ENCODE measurements at regions of chr18 and their contacts with region 1.

Region 1: GRCh38 chr18:44673256-44673880 is 7.3 kb upstream of the SETBP1 start:
- DNase-seq: no peak
- ATAC-seq: no peak
- H3K4me3 ChIP-seq: no peak overlapping the region
- H3K4me3 Mint-ChIP-seq: no peak overlapping the region
- H3K27ac ChIP-seq: no peak overlapping the region
- H3K27ac Mint-ChIP-seq: no peak overlapping the region
- H3K4me1 ChIP-seq: no peaks in the 10 kb centered on the region
- H3K4me1 Mint-ChIP-seq: peaks cover 3% of the 10 kb centered on the region
- H3K27me3 ChIP-seq: no peaks in the 10 kb centered on the region
- H3K27me3 Mint-ChIP-seq: peaks cover 16% of the 10 kb centered on the region
- CTCF ChIP-seq: no peak

Region 2: GRCh38 chr18:44627280-44627679 is 46.1 kb before region 1 on chr18:
- CTCF ChIA-PET with region 1: no interaction called
- POLR2A ChIA-PET with region 1: no interaction called
- intact Hi-C with region 1: loop called in 1 of 2 experiments (anchors 1 kb)
- DNase-seq: no peak
- ATAC-seq: no peak
- H3K4me3 ChIP-seq: no peak overlapping the region
- H3K4me3 Mint-ChIP-seq: no peak overlapping the region
- H3K27ac ChIP-seq: no peak overlapping the region
- H3K27ac Mint-ChIP-seq: no peak overlapping the region
- H3K4me1 ChIP-seq: no peaks in the 10 kb centered on the region
- H3K4me1 Mint-ChIP-seq: no peaks in the 10 kb centered on the region
- H3K27me3 ChIP-seq: no peaks in the 10 kb centered on the region
- H3K27me3 Mint-ChIP-seq: no peaks in the 10 kb centered on the region
- CTCF ChIP-seq: no peak

Region 3: DNA sequence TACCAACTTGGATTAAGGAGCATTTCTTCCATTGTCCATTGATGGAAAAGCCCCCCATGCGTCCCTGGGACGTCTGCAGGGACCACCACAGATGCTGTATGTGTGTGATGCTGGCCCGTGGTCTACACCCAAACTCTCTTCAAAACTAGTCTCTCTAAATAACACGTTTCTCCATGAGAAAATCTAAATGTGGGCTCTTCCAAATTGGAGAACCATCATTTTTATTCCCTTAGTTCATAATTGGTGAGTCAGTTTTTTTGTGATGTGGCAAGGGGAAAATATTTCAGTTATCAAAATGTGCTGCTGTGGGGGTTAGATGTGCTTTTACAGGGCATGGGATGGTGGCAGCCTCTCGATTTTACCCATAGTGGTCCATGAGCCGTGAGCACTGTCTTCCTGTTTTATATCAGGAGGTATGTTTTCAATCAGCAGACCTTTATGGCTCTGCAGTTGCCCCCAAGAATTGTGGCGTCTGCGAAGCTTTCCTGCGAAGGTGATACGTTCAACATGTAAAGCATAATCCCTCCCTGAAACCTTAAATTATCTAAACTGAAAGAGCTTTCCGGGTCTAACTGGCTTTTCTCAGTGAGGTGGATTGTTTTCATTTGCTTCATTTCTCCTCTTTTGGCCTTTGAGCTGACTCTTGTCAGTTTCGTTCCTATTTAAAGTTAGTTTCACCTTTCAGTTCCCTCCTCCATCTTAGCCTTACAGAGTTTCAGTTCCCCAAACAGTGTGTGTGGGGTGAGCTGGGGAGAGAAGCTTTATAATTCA is 85.7 kb after region 1 on chr18:
- CTCF ChIA-PET with region 1: no interaction called
- POLR2A ChIA-PET with region 1: no interaction called
- intact Hi-C with region 1: no loop called
- DNase-seq: peak in 2 of 9 experiments; percentile 23 to 54
- ATAC-seq: peak; percentile 46
- H3K4me3 ChIP-seq: peak overlapping the region in 1 of 2 experiments; percentile 18
- H3K4me3 Mint-ChIP-seq: peak overlapping the region; percentile 37
- H3K27ac ChIP-seq: peak overlapping the region; percentile 6 to 63
- H3K27ac Mint-ChIP-seq: peak overlapping the region; percentile 85
- H3K4me1 ChIP-seq: peaks cover 12% of the 10 kb centered on the region
- H3K4me1 Mint-ChIP-seq: peaks cover 18% of the 10 kb centered on the region
- H3K27me3 ChIP-seq: no peaks in the 10 kb centered on the region
- H3K27me3 Mint-ChIP-seq: no peaks in the 10 kb centered on the region
- CTCF ChIP-seq: no peak

Region 4: GRCh38 chr18:46035696-46036680 is 1362.6 kb after region 1 on chr18:
- CTCF ChIA-PET with region 1: no interaction called
- POLR2A ChIA-PET with region 1: no interaction called
- intact Hi-C with region 1: no loop called
- DNase-seq: no peak
- ATAC-seq: no peak
- H3K4me3 ChIP-seq: no peak overlapping the region
- H3K4me3 Mint-ChIP-seq: no peak overlapping the region
- H3K27ac ChIP-seq: no peak overlapping the region
- H3K27ac Mint-ChIP-seq: no peak overlapping the region
- H3K4me1 ChIP-seq: peaks cover 11% of the 10 kb centered on the region
- H3K4me1 Mint-ChIP-seq: peaks cover 18% of the 10 kb centered on the region
- H3K27me3 ChIP-seq: no peaks in the 10 kb centered on the region
- H3K27me3 Mint-ChIP-seq: no peaks in the 10 kb centered on the region
- CTCF ChIP-seq: no peak

Measured in CD8-positive, alpha-beta T cell (primary cell).